Head of caudate nucleus (tissue), 42 donors: ENCODE measurements at regions of chr1 and their contacts with region 1.

Region 1: DNA sequence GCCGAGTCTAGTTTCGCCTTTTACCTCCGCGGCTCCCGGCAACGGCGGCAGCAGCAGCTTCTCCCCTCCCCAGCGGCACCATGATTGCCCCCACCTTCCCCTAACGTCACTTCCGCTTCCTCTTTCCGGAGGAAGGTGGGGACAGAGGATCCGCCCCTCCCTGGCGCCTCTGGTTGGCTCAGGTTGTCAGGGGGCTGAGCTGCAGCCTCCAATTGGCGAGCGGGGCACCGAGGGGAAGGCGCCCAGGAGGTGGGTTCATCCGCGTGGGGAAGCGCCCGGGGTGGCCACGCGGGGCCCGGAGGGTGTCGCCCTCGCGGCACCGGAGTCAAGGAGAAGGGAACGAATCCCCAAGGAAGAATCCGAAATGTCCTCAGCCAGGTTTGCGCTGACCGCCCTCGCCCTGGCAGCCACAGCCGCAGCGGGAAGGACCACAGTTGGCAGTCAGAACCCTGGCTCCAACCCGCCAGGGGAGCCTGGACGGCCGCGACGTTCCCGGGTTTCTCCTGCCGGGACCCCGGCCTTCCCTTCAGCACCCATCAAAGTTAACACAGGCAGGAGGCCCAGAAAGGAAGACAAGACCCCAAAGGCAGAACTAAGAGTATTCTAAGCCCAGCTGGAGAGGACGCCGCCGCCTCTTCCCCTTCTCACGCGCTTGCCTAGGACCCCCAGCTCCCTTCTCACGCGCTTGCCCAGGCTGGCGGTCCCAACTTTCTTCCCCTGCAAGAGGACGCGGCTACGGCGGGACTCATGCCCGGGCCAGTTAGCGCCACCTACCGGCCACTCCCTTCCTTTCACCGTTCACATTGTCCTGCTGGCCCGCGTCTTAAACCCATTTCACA is at the start of gene MTF1:
- DNase-seq: peak; percentile 94 to 99 (median 98)

Region 2: GRCh38 chr1:37602750-37603694 is 256.7 kb before region 1 on chr1:
- intact Hi-C with region 1: loop called (anchors 10 kb)
- DNase-seq: peak in 25 of 42 donors; percentile 15 to 66 (median 34)

Region 3: DNA sequence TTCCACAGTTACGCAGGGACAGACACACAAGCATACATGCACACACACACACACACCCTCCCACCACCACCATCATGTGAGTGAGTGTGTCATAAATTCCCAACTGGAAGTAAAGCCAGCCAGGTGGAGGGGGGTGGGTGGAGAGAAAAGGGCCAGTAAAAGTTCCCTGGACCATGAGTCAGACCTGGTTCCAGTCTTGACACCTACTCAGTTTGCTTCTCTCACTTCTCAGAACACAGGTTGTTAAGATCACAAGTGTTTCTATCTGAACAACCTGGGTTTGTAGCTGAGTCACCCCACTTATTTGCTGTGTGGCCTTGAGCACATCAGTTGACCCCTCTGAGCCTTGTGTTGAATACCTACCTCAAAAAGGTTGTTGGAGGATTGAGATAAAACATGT is 104.4 kb before region 1 on chr1:
- intact Hi-C with region 1: no loop called
- DNase-seq: peak in 1 of 42 donors; percentile 6

Region 4: DNA sequence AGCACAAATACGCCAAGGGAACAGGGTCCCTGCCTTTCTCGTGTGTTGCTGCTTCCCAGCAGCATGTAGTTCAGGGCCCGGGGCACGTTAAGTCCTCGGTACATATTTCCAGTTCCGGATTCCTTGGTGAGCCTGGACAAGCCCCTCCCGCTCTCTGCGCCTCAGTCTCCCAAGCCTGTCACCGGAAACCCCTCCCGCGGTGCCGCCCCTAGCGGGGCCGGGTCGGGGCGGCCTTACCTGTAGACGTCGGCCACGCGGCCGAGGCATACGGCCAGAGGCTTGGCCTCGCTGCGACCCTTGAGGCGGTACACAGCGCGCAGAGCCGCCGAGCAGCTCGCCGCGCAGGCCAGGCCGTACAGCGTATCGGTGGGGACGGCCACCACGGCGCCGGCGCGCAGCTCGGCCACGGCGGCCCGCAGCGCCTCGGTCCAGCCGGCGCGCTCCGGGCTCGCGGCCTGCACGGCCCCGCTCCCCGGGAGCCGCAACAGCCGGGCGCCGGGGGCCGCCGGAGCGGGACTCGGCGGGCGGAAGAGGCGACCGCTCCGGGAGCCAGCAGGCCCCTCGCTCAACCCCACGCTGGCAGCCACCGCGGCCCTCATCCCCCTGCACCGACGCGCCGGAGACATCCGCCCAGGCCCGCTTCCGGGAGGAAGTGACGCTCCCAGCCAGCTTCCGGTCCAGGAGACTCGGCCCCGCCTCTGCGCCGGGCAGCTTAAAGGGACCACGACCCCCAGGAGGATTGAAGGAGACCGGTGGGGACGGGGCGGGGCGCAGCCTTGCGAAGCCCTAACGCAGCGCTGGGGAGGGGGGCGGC is 52.0 kb before region 1 on chr1 and contains the starts of genes C1orf122 and YRDC:
- intact Hi-C with region 1: loop called (anchors 2 kb)
- DNase-seq: peak; percentile 88 to 99 (median 97)

Region 5: DNA sequence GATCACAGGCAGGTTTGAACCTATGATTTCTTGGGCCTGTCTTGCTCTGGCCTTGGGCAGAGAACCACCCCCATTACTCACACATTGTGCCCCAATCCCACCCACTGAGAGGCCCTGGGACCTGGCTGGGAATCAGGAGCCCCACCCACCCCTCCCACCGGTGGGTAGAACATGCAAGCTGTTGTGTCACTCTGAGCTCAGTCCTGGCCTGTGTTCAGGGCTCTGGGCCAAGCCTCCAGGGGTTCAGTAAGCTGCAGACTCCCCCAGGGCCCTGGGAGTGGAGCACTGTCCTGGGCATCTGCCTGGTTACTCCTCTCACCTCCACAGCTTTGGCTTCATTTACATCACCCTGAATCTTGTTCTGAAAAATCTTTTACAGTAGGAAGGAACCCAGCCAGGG is 729.3 kb after region 1 on chr1:
- intact Hi-C with region 1: no loop called
- DNase-seq: peak in 1 of 42 donors; percentile 39